Gastrocnemius medialis (tissue), 4 donors: ENCODE measurements at regions of chr17 and their contacts with region 1.

Region 1: GRCh38 chr17:2711601-2712299 is at the start of gene CLUH:
- DNase-seq: peak; percentile 94 to 98
- ATAC-seq: peak; percentile 52 to 61
- H3K4me3 ChIP-seq: peak within 1 kb of the TSS; percentile 65 to 84 (median 77)
- H3K27ac ChIP-seq: peak within 1 kb of the TSS; percentile 91 to 98 (median 96)
- H3K4me1 ChIP-seq: peaks cover 45 to 52% of the 10 kb centered on the region in 2 donors
- H3K27me3 ChIP-seq: no peaks in the 10 kb centered on the region
- CTCF ChIP-seq: peak in 1 of 5 experiments; percentile 49
- POLR2A ChIP-seq: peak; percentile 98 to 99
- total RNA-seq, gene CLUH: 104 to 286 (median 211) TPM

Region 2: GRCh38 chr17:2275722-2276121 is 436.0 kb before region 1 on chr17:
- in situ Hi-C with region 1: no loop called
- intact Hi-C with region 1: no loop called
- DNase-seq: no peak
- ATAC-seq: peak in 1 of 2 donors; percentile 58
- H3K4me3 ChIP-seq: no peak overlapping the region
- H3K27ac ChIP-seq: no peak overlapping the region
- H3K4me1 ChIP-seq: peaks cover 0 to 3% of the 10 kb centered on the region in 2 donors
- H3K27me3 ChIP-seq: no peaks in the 10 kb centered on the region
- CTCF ChIP-seq: no peak
- POLR2A ChIP-seq: no peak

Region 3: DNA sequence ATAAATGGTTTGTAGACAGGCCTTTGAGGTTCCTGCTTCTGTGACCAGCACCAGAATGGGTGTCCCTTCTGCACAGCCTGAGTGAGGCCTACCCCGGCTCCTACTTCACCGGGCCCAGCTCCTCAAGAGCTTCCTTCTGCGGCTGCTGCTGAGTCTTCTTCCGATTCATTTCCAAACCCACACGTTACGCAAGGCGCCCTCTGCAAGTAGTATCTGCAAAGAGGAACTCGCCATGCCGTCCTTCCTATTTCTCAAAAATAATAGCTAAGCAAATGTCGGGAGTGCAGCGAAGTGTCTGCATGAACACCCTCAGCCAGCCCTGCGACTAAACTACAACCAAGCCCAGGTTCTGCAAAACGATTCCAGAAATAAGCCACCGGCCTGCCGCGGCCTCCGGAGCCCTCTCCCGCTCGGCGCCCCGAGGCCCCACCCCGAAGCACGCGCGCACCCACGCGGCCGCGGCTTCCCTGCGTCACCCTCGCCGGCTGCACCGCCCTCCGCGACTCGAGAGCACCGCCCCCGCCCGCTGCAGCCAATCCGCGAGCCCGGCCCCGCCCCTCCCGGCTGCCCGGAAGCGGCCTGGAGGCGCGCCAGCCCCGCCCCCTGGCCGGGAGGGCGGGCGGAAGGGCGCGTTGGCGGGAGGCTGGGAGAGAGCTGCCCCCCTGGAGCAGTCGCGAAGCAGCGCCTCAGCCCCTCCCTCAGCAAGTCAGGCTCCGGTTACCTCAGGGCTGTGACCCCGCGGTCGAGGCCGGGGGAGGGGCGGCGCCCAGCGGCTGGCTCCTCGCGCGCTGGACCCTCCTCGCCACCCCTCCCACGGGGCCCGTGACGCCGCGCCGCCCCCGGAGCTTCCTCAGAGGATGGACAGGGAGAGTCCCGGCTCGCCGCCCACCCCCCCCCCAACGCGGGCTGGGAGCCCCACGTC is 319.2 kb before region 1 on chr17:
- in situ Hi-C with region 1: no loop called
- intact Hi-C with region 1: loop called (anchors 2 kb)
- DNase-seq: peak; percentile 94 to 95
- ATAC-seq: peak; percentile 57 to 59
- H3K4me3 ChIP-seq: peak overlapping the region; percentile 62 to 99 (median 79)
- H3K27ac ChIP-seq: peak overlapping the region; percentile 97 to 99 (median 99)
- H3K4me1 ChIP-seq: peaks cover 64 to 80% of the 10 kb centered on the region in 2 donors
- H3K27me3 ChIP-seq: no peaks in the 10 kb centered on the region
- CTCF ChIP-seq: no peak
- POLR2A ChIP-seq: peak; percentile 84 to 95

Region 4: GRCh38 chr17:2484876-2485275 is 226.9 kb before region 1 on chr17:
- in situ Hi-C with region 1: no loop called
- intact Hi-C with region 1: loop called (anchors 5 kb)
- DNase-seq: no peak
- ATAC-seq: no peak
- H3K4me3 ChIP-seq: no peak overlapping the region
- H3K27ac ChIP-seq: peak overlapping the region in 1 of 4 donors; percentile 81
- H3K4me1 ChIP-seq: peaks cover 10 to 15% of the 10 kb centered on the region in 2 donors
- H3K27me3 ChIP-seq: no peaks in the 10 kb centered on the region
- CTCF ChIP-seq: no peak
- POLR2A ChIP-seq: no peak

Region 5: GRCh38 chr17:2547176-2547575 is 164.6 kb before region 1 on chr17:
- in situ Hi-C with region 1: no loop called
- intact Hi-C with region 1: no loop called
- DNase-seq: no peak
- ATAC-seq: no peak
- H3K4me3 ChIP-seq: no peak overlapping the region
- H3K27ac ChIP-seq: no peak overlapping the region
- H3K4me1 ChIP-seq: no peaks in the 10 kb centered on the region
- H3K27me3 ChIP-seq: peaks cover 3 to 11% (median 8%) of the 10 kb centered on the region in 3 donors
- CTCF ChIP-seq: no peak
- POLR2A ChIP-seq: no peak

Region 6: DNA sequence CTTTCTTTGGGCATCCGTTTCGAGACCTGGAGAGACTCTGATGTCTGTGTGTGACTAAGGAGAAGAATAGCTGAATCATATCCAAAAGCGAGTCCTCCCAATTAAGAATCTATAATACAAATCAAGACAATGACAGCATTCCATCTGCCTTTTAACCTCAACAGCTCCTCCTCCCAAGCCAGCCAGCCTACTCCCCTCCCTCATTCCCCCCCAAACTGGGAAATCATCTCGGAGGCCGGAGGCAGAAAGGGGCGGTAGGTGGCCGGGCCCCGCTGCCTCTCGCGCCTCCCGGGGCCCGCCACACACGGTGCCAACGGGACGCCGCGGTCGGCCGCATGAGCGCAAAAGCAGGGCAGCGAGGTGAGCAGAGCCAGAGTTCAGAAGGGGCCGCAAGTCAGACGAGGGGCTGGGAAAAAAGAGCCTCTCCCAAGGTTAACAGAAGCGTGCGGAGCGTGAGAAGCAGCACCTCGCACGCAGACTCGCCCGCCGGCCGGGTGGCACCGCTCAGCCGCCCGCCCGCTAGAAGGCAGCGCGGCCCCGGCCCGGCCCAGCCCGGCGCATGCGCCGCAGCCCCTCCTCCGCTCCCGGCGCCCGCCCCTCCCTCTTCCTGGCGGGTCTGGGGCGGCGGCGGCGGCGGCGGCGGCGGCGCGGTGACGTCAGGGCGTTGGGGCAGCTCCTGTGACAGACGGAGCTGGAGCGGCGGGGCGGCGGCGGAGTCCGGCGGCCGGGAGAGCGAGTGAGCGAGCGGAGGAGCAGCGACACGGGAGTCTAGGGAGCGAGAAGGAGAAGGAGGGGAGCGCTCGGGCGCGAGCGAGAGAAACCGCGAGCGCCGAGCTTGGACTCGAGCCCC is 118.6 kb before region 1 on chr17 and contains the start of gene PAFAH1B1:
- in situ Hi-C with region 1: loop called in 2 of 4 experiments (anchors 10 kb)
- intact Hi-C with region 1: loop called (anchors 1 kb)
- DNase-seq: peak; percentile 84 to 91
- ATAC-seq: peak; percentile 83 to 86
- H3K4me3 ChIP-seq: peak within 1 kb of the TSS; percentile 91 to 99 (median 97)
- H3K27ac ChIP-seq: peak within 1 kb of the TSS; percentile 97 to 100 (median 98)
- H3K4me1 ChIP-seq: peaks cover 26 to 36% of the 10 kb centered on the region in 2 donors
- H3K27me3 ChIP-seq: no peaks in the 10 kb centered on the region
- CTCF ChIP-seq: peak in 3 of 5 experiments; percentile 30 to 49 (median 46)
- POLR2A ChIP-seq: peak; percentile 95 to 96
- total RNA-seq, gene PAFAH1B1: 99.2 to 106 (median 105) TPM

Region 7: GRCh38 chr17:2672026-2672425 is 39.7 kb before region 1 on chr17:
- in situ Hi-C with region 1: no loop called
- intact Hi-C with region 1: no loop called
- DNase-seq: no peak
- ATAC-seq: no peak
- H3K4me3 ChIP-seq: no peak overlapping the region
- H3K27ac ChIP-seq: no peak overlapping the region
- H3K4me1 ChIP-seq: no peaks in the 10 kb centered on the region
- H3K27me3 ChIP-seq: no peaks in the 10 kb centered on the region
- CTCF ChIP-seq: no peak
- POLR2A ChIP-seq: no peak

Region 8: GRCh38 chr17:2688351-2689342 is 23.1 kb before region 1 on chr17:
- in situ Hi-C with region 1: no loop called
- intact Hi-C with region 1: loop called (anchors 2 kb)
- DNase-seq: peak; percentile 86 to 88
- ATAC-seq: peak; percentile 64 to 73
- H3K4me3 ChIP-seq: no peak overlapping the region
- H3K27ac ChIP-seq: peak overlapping the region; percentile 82 to 94 (median 90)
- H3K4me1 ChIP-seq: peaks cover 38 to 41% of the 10 kb centered on the region in 2 donors
- H3K27me3 ChIP-seq: no peaks in the 10 kb centered on the region
- CTCF ChIP-seq: no peak
- POLR2A ChIP-seq: peak in 1 of 2 donors; percentile 50